Activated CD4-positive, alpha-beta memory T cell treated with anti-CD3 and anti-CD28 coated beads, Interleukin-2, amount 10 ng/mL, durations not matched to agents 7 days and 5 days (primary cell): ENCODE measurements at regions of chr9 and their contacts with region 1.

Region 1: DNA sequence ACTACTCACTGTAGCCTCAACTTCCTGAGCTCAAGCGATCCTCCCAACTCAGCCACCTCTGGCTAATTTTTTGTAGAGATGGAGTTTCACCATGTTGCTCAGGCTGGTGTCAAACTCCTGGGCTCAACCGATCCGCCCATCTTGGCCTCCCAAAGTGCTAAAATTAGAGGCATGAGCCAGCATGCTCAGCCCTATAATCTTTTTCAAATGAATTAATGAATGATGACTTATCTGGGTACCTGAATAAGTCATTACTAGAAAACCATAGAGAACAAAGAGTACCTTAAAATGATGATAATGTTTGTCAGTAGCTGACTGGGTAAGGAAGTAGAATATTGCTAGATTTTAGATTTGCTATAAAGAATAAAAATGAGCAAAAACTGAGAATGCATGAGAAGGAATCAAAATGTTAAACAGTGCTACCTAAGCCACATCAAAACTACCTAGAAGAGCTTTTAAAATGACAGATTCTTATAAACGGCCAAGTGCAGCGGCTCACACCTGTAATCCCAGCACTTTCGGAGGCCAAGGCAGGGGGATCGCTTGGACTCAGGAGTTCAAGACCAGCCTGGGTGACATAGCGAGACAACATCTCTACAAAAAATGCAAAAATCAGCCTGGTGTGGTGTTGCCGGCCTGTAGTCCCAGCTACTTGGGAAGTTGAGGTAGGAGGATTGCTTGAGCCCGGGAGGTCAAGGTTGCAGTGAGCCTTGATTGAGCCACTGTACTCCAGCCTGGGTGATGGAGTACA is 13.6 kb downstream of the FNBP1 start:
- DNase-seq: peak; percentile 53
- H3K4me3 Mint-ChIP-seq: peak overlapping the region; percentile 39
- H3K27ac Mint-ChIP-seq: peak overlapping the region; percentile 88
- H3K4me1 Mint-ChIP-seq: peaks cover 90% of the 10 kb centered on the region
- H3K27me3 Mint-ChIP-seq: no peaks in the 10 kb centered on the region

Region 2: DNA sequence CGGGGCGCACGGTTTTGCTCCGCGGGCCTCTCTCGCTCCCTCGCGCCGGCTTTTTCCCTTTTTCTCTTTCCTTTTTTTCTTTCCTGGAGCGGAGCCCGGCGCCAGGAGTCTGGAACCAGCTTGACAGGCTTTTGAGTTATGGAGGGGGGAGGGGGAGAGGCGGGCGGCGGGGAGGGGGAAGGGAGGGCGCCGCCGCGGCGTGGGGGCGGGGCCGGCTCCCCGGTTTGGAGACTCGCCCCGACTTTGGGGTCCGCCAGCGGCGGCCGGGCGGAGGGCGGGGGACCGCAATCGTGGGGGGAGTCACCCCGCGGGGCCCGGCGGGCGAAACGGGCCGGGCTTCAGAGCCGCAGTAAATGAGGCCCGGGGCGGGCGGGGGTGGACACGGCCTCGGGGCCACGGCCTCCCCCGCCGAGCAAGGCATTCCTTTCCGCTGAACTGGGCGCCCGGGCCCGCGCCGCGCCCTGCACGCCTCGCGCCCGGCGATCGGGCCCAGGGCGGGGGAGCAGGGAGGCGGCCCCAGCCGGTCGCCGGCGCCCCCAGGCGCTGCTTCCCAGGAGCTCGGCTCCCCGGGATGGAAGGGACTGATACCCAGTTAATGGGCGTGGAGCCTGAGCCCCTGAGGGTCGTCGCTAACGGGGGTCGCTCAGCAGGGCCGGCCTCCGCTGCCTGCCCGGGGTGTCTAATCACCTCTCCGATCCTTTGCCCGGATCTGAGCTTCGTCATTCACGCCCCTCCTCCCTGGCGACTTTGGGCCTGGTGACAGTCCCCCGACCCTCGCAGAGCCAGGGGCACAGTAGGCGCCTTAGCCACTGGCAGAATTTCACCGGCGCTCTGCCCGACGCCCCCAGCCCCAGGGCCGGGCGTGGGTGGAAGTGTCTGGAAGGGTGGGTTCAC is 546.6 kb before region 1 on chr9:
- CTCF ChIA-PET with region 1: no interaction called
- POLR2A ChIA-PET with region 1: no interaction called
- DNase-seq: peak; percentile 26
- H3K4me3 Mint-ChIP-seq: peak overlapping the region; percentile 35
- H3K27ac Mint-ChIP-seq: no peak overlapping the region
- H3K4me1 Mint-ChIP-seq: peaks cover 37% of the 10 kb centered on the region
- H3K27me3 Mint-ChIP-seq: peaks cover 26% of the 10 kb centered on the region

Region 3: DNA sequence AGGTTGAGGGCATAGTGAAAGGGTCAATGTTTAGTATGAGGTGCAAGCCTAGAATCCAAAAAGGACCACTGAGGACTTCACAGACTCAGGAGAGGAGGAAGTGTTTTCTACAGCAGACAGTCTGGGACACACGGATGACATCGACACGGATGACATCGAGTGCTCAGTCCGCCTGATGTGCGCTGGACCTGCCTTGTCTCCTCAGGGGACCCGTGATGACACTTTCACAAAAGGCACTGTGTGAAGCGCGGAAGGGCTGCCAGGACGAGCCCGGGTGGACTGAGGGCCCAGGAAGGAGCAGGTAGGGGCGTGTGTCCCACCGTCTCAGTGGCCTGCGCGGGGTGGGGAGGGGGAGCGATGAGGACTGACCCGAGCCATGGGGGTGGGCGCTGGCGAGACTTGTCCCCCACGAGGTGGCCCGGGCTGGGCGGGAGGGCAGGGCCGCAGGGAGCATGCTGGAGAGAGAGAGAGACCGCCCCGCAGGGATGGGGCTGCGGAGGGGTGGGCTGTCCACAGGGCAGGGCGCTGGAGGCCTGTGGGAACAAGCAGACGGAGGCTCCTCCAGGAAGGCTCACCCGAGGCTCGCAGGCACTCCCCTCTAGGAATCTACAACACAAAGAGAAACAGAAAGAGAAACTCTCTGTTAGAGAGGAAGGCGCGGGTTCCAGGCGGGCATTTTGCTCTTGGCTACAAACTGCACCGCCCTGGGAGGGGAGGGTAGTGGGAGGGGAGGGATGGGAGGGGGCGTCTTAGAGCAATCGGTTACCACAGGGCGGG is 139.3 kb before region 1 on chr9:
- CTCF ChIA-PET with region 1: interaction called, 7 read pairs
- POLR2A ChIA-PET with region 1: interaction called, 403 read pairs
- DNase-seq: peak; percentile 86
- H3K4me3 Mint-ChIP-seq: peak overlapping the region; percentile 80
- H3K27ac Mint-ChIP-seq: peak overlapping the region; percentile 100
- H3K4me1 Mint-ChIP-seq: peaks cover 89% of the 10 kb centered on the region
- H3K27me3 Mint-ChIP-seq: no peaks in the 10 kb centered on the region

Region 4: GRCh38 chr9:130010151-130010988 is 19.0 kb before region 1 on chr9:
- CTCF ChIA-PET with region 1: interaction called, 3 read pairs
- POLR2A ChIA-PET with region 1: interaction called, 15 read pairs
- DNase-seq: no peak
- H3K4me3 Mint-ChIP-seq: no peak overlapping the region
- H3K27ac Mint-ChIP-seq: peak overlapping the region; percentile 66
- H3K4me1 Mint-ChIP-seq: peaks cover 78% of the 10 kb centered on the region
- H3K27me3 Mint-ChIP-seq: no peaks in the 10 kb centered on the region

Region 5: DNA sequence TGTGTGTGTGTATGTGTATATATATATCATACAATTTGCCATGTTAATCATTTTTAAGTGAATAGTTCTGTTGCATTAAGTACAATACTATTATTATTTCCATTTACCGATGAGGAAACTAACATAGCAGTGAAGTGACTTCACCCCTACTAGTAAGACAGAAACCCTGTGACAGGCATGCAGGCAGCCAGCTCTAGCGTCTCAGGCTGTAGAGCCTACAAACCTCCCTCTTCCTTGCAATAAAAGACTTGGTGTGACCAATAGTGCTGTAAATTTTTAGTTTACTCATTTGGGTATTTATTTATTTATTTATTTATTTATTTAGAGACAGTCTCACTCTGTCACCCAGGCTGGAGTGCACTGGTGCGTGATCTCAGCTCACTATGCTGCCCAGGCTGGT is 11.1 kb before region 1 on chr9:
- CTCF ChIA-PET with region 1: interaction called, 9 read pairs
- POLR2A ChIA-PET with region 1: interaction called, 26 read pairs
- DNase-seq: no peak
- H3K4me3 Mint-ChIP-seq: no peak overlapping the region
- H3K27ac Mint-ChIP-seq: peak overlapping the region; percentile 54
- H3K4me1 Mint-ChIP-seq: peaks cover 67% of the 10 kb centered on the region
- H3K27me3 Mint-ChIP-seq: no peaks in the 10 kb centered on the region

Region 6: GRCh38 chr9:130090915-130091314 is 61.5 kb after region 1 on chr9:
- CTCF ChIA-PET with region 1: no interaction called
- POLR2A ChIA-PET with region 1: no interaction called
- DNase-seq: no peak
- H3K4me3 Mint-ChIP-seq: no peak overlapping the region
- H3K27ac Mint-ChIP-seq: no peak overlapping the region
- H3K4me1 Mint-ChIP-seq: peaks cover 7% of the 10 kb centered on the region
- H3K27me3 Mint-ChIP-seq: no peaks in the 10 kb centered on the region